A549 (cell line): ENCODE measurements at regions of chr10 and their contacts with region 1.

Region 1: DNA sequence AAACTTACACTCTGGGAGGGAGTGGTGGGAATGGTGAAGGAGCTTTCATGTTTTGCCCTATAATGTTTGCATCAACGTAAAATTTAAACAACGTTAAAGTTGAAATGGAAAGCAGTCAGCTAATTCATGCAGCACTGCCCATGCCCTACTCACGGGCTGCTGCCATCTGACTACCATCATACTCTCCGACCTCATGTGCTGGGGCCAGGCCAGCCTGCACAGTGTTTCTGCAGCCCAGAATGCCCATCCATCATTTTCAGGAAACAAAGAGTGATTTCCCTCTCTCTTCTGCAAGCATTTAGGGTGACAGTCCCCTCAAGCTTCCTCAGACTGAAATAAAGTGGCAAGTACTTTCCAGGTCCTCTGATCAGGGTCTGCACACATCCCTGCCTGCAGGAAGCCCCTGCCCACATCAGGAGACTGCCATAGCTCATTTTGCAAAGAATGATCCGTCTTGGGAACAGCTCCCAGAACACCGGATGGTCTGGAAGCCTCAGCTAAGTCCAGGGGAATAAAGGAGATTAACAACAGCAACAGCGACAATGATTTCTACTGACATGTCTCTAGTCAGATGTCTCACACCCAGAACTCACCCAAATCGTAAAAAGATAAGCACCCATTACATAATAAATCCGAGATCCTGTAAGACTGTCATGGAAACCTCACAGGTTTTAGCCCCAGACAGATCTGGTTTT is 40.3 kb downstream of the ARHGAP22 start:
- DNase-seq: no peak
- ATAC-seq: no peak
- H3K4me3 ChIP-seq: no peak overlapping the region
- H3K27ac ChIP-seq: no peak overlapping the region
- H3K4me1 ChIP-seq: no peaks in the 10 kb centered on the region
- CTCF ChIP-seq: no peak
- EP300 ChIP-seq: no peak
- POLR2A ChIP-seq: no peak
- RAD21 ChIP-seq: no peak

Region 2: GRCh38 chr10:48551861-48552591 is 12.6 kb before region 1 on chr10:
- CTCF ChIA-PET with region 1: interaction called, 17 read pairs
- POLR2A ChIA-PET with region 1: no interaction called
- DNase-seq: peak; percentile 37 to 61
- ATAC-seq: peak; percentile 75 to 89
- H3K4me3 ChIP-seq: no peak overlapping the region
- H3K27ac ChIP-seq: no peak overlapping the region
- H3K4me1 ChIP-seq: no peaks in the 10 kb centered on the region
- CTCF ChIP-seq: peak; percentile 77
- EP300 ChIP-seq: no peak
- POLR2A ChIP-seq: no peak
- RAD21 ChIP-seq: peak; percentile 69 to 73